T-cell (primary cell): ENCODE measurements at regions of chr16 and their contacts with region 1.

Region 1: DNA sequence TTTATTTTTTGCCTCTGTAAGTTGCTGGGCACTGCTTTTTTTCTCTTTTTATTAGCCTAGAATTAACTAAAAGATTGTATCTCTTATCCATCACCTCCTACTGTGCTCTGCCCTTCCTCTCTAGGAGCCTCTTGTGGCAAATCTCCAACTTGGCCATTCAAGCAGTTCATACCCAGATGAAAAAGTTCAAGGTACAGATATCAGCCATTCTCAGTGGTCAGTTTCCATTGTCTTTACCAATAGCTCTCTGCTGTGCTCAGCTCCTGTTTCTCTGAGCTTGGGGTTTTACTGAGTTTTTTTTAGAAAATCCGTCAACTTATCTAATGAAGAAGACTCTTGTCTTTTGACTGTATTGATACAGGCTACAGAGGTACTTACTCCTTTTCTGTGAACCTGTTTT is 15.6 kb downstream of the MOSMO start:
- DNase-seq: no peak
- ATAC-seq: no peak
- H3K4me3 ChIP-seq: no peak overlapping the region
- H3K4me3 Mint-ChIP-seq: no peak overlapping the region
- H3K27ac ChIP-seq: no peak overlapping the region
- H3K27ac Mint-ChIP-seq: no peak overlapping the region
- H3K4me1 ChIP-seq: peaks cover 0 to 1% of the 10 kb centered on the region in 2 experiments
- H3K4me1 Mint-ChIP-seq: peaks cover 38 to 46% (median 41%) of the 10 kb centered on the region in 3 donors
- H3K27me3 ChIP-seq: no peaks in the 10 kb centered on the region
- H3K27me3 Mint-ChIP-seq: no peaks in the 10 kb centered on the region

Region 2: GRCh38 chr16:22055878-22056277 is 32.4 kb after region 1 on chr16:
- CTCF ChIA-PET with region 1: interaction called in 1 of 2 experiments, 10 read pairs
- POLR2A ChIA-PET with region 1: no interaction called
- DNase-seq: no peak
- ATAC-seq: no peak
- H3K4me3 ChIP-seq: no peak overlapping the region
- H3K4me3 Mint-ChIP-seq: no peak overlapping the region
- H3K27ac ChIP-seq: no peak overlapping the region
- H3K27ac Mint-ChIP-seq: no peak overlapping the region
- H3K4me1 ChIP-seq: peaks cover 3 to 4% of the 10 kb centered on the region in 2 experiments
- H3K4me1 Mint-ChIP-seq: peaks cover 21 to 24% (median 23%) of the 10 kb centered on the region in 3 donors
- H3K27me3 ChIP-seq: no peaks in the 10 kb centered on the region
- H3K27me3 Mint-ChIP-seq: no peaks in the 10 kb centered on the region

Region 3: DNA sequence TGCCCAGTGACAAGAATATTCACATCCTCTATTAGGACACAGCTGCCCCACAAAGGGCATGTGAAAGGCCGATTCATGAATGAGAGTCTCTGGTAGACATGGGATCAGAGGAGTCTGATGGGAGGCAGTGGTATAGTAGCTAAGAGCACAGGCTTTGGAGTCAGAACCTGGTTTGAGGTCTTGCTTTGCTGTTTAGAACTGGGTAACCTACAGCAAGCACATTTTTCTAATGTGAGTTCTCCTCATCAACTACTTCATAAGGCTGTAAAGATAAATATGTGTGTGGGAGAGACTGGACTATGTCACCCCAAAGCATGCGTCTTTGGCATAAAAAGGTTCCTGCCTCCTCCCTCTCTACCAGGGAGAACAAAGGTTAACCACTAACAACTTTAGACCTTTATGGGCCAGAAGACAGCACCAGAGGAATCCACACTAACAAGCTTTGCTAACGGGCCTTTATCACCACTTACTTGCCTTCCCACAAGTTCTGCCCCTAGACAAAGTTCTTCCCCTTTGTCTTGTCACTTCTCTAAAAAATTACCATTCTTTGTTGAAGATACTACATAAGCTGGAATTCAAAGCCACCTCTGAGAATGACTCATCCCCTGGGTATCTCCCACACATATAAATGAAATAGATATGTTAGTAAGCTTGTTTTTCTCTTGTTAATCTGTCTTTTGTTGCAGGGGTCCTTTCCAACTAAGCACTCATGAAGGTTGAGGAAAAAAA is 329.9 kb after region 1 on chr16:
- CTCF ChIA-PET with region 1: no interaction called
- POLR2A ChIA-PET with region 1: interaction called in 1 of 2 experiments, 10 read pairs
- DNase-seq: peak in 1 of 35 experiments; percentile 53
- ATAC-seq: peak; percentile 22 to 37 (median 28)
- H3K4me3 ChIP-seq: no peak overlapping the region
- H3K4me3 Mint-ChIP-seq: peak overlapping the region; percentile 7 to 33 (median 26)
- H3K27ac ChIP-seq: peak overlapping the region; percentile 46
- H3K27ac Mint-ChIP-seq: peak overlapping the region; percentile 85 to 89
- H3K4me1 ChIP-seq: peaks cover 40 to 55% of the 10 kb centered on the region in 2 experiments
- H3K4me1 Mint-ChIP-seq: peaks cover 59 to 69% (median 59%) of the 10 kb centered on the region in 3 donors
- H3K27me3 ChIP-seq: no peaks in the 10 kb centered on the region
- H3K27me3 Mint-ChIP-seq: no peaks in the 10 kb centered on the region

Region 4: GRCh38 chr16:23754594-23755483 is 1731.3 kb after region 1 on chr16 and contains the start of gene CHP2:
- CTCF ChIA-PET with region 1: no interaction called
- POLR2A ChIA-PET with region 1: no interaction called
- DNase-seq: no peak
- ATAC-seq: no peak
- H3K4me3 ChIP-seq: no peak within 1 kb of the TSS
- H3K4me3 Mint-ChIP-seq: peak within 1 kb of the TSS in 1 of 3 donors; percentile 40
- H3K27ac ChIP-seq: no peak within 1 kb of the TSS
- H3K27ac Mint-ChIP-seq: no peak within 1 kb of the TSS
- H3K4me1 ChIP-seq: peaks cover 0 to 12% of the 10 kb centered on the region in 2 experiments
- H3K4me1 Mint-ChIP-seq: peaks cover 0 to 8% (median 1%) of the 10 kb centered on the region in 3 donors
- H3K27me3 ChIP-seq: peaks cover 3 to 49% of the 10 kb centered on the region in 2 experiments
- H3K27me3 Mint-ChIP-seq: peaks cover 42 to 58% of the 10 kb centered on the region in 2 donors
- total RNA-seq, gene CHP2: not detected